Activated T-helper 1 cell treated with anti-CD3 and anti-CD28 coated beads, Interleukin-12 subunit alpha, Interleukin-12 subunit beta, Interleukin-2, Interleukin-4 antibody, amounts not matched to agents 30 ng/mL and 10 ng/mL and 1 ng/mL, durations not matched to agents 14 hours and 24 hours and 36 hours (primary cell): ENCODE measurements at regions of chr11 and their contacts with region 1.

Region 1: DNA sequence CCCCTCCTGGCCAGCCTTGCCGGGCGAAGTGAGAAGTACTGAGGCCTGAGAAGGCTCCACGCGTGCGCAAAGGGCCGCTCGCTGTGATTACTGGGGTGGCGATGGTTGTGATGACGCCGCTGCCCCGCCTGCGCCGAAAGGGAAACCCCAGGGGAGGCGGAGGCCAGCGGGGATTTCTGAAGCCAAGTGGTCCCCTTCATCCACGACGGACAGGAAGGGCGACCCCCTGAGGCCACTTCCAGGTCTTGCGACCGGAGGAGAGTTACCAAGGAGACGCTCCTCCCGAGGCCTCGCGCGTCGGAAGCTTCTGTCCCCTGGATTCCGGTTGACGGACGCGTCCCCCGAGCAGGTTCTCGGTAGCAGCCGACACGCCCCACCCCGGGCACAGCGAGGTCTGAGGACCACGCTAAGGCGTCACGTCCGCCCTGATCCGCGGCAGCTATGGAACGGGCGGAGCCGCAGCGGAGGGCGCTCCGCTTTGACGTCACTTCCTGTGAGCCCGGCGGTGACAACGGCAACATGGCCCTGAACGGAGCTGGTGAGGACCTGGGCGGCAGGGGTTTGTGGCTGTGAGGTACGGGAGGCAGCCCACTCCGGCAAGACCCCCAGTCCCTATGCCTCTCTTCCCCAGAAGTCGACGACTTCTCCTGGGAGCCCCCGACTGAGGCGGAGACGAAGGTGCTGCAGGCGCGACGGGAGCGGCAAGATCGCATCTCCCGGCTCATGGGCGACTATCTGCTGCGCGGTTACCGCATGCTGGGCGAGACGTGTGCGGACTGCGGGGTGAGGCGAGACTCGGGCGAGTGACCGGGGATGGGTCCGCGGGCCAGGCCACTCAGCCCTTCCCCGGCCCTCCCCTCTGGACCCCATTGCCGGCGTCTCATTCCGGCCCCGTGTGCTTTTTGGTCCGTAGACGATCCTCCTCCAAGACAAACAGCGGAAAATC is at the start of gene ZNRD2:
- DNase-seq: peak; percentile 99
- H3K4me3 Mint-ChIP-seq: peak within 1 kb of the TSS; percentile 99
- H3K27ac Mint-ChIP-seq: peak within 1 kb of the TSS; percentile 98
- H3K4me1 Mint-ChIP-seq: peaks cover 64% of the 10 kb centered on the region
- H3K27me3 Mint-ChIP-seq: no peaks in the 10 kb centered on the region
- total RNA-seq, gene ZNRD2: 94.6 and 96.9 TPM in 2 replicates

Region 2: GRCh38 chr11:64878494-64879243 is 691.6 kb before region 1 on chr11 and contains the start of gene EHD1:
- intact Hi-C with region 1: loop called (anchors 5 kb)
- DNase-seq: peak; percentile 99
- H3K4me3 Mint-ChIP-seq: peak within 1 kb of the TSS; percentile 99
- H3K27ac Mint-ChIP-seq: peak within 1 kb of the TSS; percentile 83
- H3K4me1 Mint-ChIP-seq: peaks cover 64% of the 10 kb centered on the region
- H3K27me3 Mint-ChIP-seq: no peaks in the 10 kb centered on the region
- total RNA-seq, gene EHD1: 88.0 and 96.9 TPM in 2 replicates

Region 3: GRCh38 chr11:65117216-65118096 is 452.8 kb before region 1 on chr11 and contains the start of gene ZNHIT2:
- intact Hi-C with region 1: loop called (anchors 1 kb)
- DNase-seq: peak; percentile 100
- H3K4me3 Mint-ChIP-seq: peak within 1 kb of the TSS; percentile 90
- H3K27ac Mint-ChIP-seq: peak within 1 kb of the TSS; percentile 93
- H3K4me1 Mint-ChIP-seq: peaks cover 52% of the 10 kb centered on the region
- H3K27me3 Mint-ChIP-seq: no peaks in the 10 kb centered on the region
- total RNA-seq, gene ZNHIT2: 20.8 and 22.1 TPM in 2 replicates

Region 4: GRCh38 chr11:65425971-65426838 is 144.0 kb before region 1 on chr11:
- intact Hi-C with region 1: loop called (anchors 2 kb)
- DNase-seq: no peak
- H3K4me3 Mint-ChIP-seq: peak overlapping the region; percentile 99
- H3K27ac Mint-ChIP-seq: peak overlapping the region; percentile 99
- H3K4me1 Mint-ChIP-seq: peaks cover 71% of the 10 kb centered on the region
- H3K27me3 Mint-ChIP-seq: peaks cover 10% of the 10 kb centered on the region

Region 5: GRCh38 chr11:65546217-65546958 is 23.9 kb before region 1 on chr11:
- intact Hi-C with region 1: loop called (anchors 1 kb)
- DNase-seq: peak; percentile 96
- H3K4me3 Mint-ChIP-seq: peak overlapping the region; percentile 76
- H3K27ac Mint-ChIP-seq: peak overlapping the region; percentile 79
- H3K4me1 Mint-ChIP-seq: peaks cover 44% of the 10 kb centered on the region
- H3K27me3 Mint-ChIP-seq: no peaks in the 10 kb centered on the region

Region 6: GRCh38 chr11:65711785-65712632 is 141.8 kb after region 1 on chr11 and contains the start of gene KAT5:
- intact Hi-C with region 1: loop called (anchors 2 kb)
- DNase-seq: peak; percentile 98
- H3K4me3 Mint-ChIP-seq: peak within 1 kb of the TSS; percentile 96
- H3K27ac Mint-ChIP-seq: peak within 1 kb of the TSS; percentile 98
- H3K4me1 Mint-ChIP-seq: peaks cover 29% of the 10 kb centered on the region
- H3K27me3 Mint-ChIP-seq: no peaks in the 10 kb centered on the region
- total RNA-seq, gene KAT5: 68.1 and 75.0 TPM in 2 replicates